PC-9 (cell line): ENCODE measurements at regions of chr5 and their contacts with region 1.

Region 1: GRCh38 chr5:172714491-172715421 is 56.2 kb downstream of the DUSP1 start:
- DNase-seq: peak; percentile 74 to 80
- H3K4me3 ChIP-seq: no peak overlapping the region
- H3K27ac ChIP-seq: 0 out of 2 replicates have a peak overlapping the region, but pooled peaks have one; percentile 18
- H3K4me1 ChIP-seq: peaks cover 14% of the 10 kb centered on the region
- H3K27me3 ChIP-seq: no peaks in the 10 kb centered on the region
- CTCF ChIP-seq: peak; percentile 88

Region 2: DNA sequence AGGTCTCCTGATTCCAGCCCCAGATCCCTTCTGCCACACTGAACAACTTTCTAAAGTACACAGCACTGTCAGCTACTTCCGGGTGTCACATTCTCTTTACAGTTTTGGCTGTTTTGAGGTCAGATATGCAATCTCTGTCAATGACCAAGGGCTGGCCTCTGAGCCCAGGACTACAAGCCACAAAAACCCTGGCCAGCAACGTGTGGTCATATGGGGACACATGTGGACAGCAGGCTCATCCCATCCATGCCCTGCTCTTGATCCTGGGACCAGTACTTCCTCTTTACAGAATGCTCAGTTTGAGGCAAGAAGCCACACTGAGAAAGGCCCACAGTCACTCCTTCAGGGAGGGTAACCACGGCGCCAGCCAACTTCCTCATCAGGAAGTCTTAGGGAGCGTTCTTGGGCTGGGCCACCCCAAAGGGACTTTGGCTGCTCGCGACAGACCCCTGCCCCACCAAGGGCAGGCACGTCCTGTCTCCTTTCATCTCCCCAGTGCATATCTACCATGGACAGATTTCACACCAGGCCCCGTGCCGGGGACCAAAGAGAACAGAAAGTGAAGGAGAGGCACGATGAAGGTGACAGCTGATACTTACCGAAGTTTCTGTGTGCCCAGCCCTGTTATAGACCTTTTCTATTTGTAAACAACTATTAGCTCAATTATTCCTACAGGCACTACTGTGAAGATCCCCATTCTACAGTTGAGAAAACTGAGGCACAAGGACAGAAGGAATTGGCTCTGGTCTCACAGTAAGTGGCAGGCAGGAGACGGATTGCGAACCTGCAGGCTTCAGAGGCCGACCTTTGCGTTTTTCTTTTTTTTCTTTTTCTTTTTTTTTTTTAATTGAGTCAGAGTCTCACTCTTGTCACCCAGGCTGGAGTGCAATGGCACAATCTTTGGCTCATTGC is 564.0 kb before region 1 on chr5:
- CTCF ChIA-PET with region 1: no interaction called
- POLR2A ChIA-PET with region 1: no interaction called
- intact Hi-C with region 1: no loop called
- DNase-seq: no peak
- H3K4me3 ChIP-seq: no peak overlapping the region
- H3K27ac ChIP-seq: no peak overlapping the region
- H3K4me1 ChIP-seq: no peaks in the 10 kb centered on the region
- H3K27me3 ChIP-seq: no peaks in the 10 kb centered on the region
- CTCF ChIP-seq: no peak

Region 3: GRCh38 chr5:172733131-172733973 is 18.6 kb after region 1 on chr5:
- CTCF ChIA-PET with region 1: interaction called, 10 read pairs
- POLR2A ChIA-PET with region 1: interaction called, 3 read pairs
- intact Hi-C with region 1: no loop called
- DNase-seq: peak; percentile 89
- H3K4me3 ChIP-seq: peak overlapping the region; percentile 5; the same call in 1 of the 2 replicates
- H3K27ac ChIP-seq: peak overlapping the region; percentile 96
- H3K4me1 ChIP-seq: peaks cover 44% of the 10 kb centered on the region
- H3K27me3 ChIP-seq: no peaks in the 10 kb centered on the region
- CTCF ChIP-seq: no peak

Region 4: GRCh38 chr5:172801184-172801671 is 86.5 kb after region 1 on chr5:
- CTCF ChIA-PET with region 1: no interaction called
- POLR2A ChIA-PET with region 1: no interaction called
- intact Hi-C with region 1: loop called (anchors 1 kb)
- DNase-seq: peak; percentile 67 to 97
- H3K4me3 ChIP-seq: no peak overlapping the region
- H3K27ac ChIP-seq: peak overlapping the region; percentile 97
- H3K4me1 ChIP-seq: peaks cover 57% of the 10 kb centered on the region
- H3K27me3 ChIP-seq: no peaks in the 10 kb centered on the region
- CTCF ChIP-seq: no peak

Region 5: DNA sequence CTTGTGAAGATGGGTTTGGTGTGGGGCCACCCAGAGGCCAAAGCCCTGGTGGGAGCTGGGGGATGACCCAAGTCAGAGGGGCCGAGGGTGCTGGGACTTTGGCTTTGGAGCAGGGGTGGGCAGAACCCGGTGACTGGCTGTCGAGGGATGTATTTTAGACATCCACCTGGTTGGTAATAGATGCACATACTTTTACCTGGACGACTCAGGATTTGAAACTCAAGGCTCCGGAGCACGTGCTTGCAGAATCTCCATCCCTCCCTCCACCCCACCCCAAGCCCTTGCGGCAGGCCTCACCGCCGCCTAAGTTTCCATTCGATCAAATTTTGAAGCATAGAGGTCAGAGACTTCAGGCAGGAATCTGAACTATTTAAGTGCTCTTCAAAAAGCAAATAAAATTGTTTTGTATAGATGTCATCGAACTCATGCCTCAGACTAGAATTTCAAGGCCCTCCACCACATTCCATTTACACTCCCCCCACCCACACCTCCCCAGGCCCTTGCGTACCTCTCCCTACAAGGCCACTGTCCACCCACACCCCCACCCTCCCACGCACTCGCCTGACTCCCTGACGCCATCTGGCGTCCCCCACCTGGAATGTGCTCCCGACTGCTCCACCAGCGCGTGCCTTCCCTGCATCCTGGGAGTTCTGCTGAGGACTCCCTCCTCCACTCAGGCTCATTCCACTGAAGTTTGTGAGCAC is 187.9 kb after region 1 on chr5:
- CTCF ChIA-PET with region 1: interaction called, 10 read pairs
- POLR2A ChIA-PET with region 1: interaction called, 3 read pairs
- intact Hi-C with region 1: loop called (anchors 1 kb)
- DNase-seq: peak; percentile 79 to 97
- H3K4me3 ChIP-seq: no peak overlapping the region
- H3K27ac ChIP-seq: peak overlapping the region; percentile 99
- H3K4me1 ChIP-seq: peaks cover 51% of the 10 kb centered on the region
- H3K27me3 ChIP-seq: no peaks in the 10 kb centered on the region
- CTCF ChIP-seq: peak; percentile 72

Region 6: GRCh38 chr5:172951791-172952511 is 237.2 kb after region 1 on chr5:
- CTCF ChIA-PET with region 1: no interaction called
- POLR2A ChIA-PET with region 1: interaction called, 7 read pairs
- intact Hi-C with region 1: loop called (anchors 1 kb)
- DNase-seq: peak in 1 of 2 experiments; percentile 41
- H3K4me3 ChIP-seq: no peak overlapping the region
- H3K27ac ChIP-seq: 0 out of 2 replicates have a peak overlapping the region, but pooled peaks have one; percentile 11
- H3K4me1 ChIP-seq: peaks cover 6% of the 10 kb centered on the region
- H3K27me3 ChIP-seq: no peaks in the 10 kb centered on the region
- CTCF ChIP-seq: no peak

Region 7: GRCh38 chr5:173144200-173145176 is 429.7 kb after region 1 on chr5 and contains the start of gene BNIP1:
- CTCF ChIA-PET with region 1: no interaction called
- POLR2A ChIA-PET with region 1: no interaction called
- intact Hi-C with region 1: loop called (anchors 5 kb)
- DNase-seq: peak; percentile 85 to 99
- H3K4me3 ChIP-seq: peak within 1 kb of the TSS; percentile 90
- H3K27ac ChIP-seq: peak within 1 kb of the TSS; percentile 73
- H3K4me1 ChIP-seq: no peaks in the 10 kb centered on the region
- H3K27me3 ChIP-seq: no peaks in the 10 kb centered on the region
- CTCF ChIP-seq: peak; percentile 84
- total RNA-seq, gene BNIP1: 13.3 and 13.5 TPM in 2 replicates